Calu3 (cell line): ENCODE measurements at regions of chr7 and their contacts with region 1.

Region 1: DNA sequence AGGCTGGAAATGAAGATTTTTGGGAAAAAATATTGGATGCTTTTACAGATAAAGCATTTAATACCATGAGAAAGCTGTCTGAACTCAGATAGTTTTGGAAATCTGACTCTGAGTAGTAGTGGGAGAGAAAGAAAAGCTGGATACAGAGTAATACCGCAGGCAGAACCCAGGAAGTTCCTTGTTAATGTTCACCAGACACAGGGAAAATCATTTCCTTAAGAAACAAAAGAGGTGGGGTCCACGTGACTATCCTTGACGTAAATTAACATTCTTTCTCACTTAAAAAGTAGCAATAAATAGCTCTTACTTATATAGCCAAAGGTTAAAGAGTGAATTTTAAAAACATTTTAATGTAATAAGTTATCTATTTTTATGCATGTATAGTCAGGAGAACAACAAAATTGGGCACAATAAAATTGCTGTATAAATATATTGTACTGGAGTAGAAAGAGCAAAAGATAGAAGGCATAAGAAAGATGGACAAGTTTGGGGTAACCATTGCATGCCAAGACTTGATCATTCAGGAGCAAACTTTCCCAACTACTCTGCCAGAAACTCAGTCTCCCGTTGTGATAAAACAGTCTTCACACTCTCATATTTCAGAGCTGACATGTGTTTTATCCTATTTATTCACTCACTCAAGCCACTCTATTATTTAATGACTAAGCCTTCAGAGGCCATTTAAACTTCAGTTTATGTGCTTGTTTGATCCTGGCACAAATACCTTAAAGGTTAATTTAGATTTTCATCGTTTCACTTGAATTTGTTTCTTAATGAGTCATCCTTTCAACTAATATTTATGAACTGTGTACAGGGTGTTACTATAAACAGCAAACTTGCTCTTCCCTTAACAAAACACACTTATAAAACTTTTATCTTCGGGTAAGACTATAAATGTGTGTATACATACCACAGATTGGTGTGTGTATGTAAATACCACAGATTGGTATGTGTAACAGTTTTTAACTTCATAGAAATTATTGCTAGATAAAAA is 143.1 kb downstream of the GNAI1 start:
- DNase-seq: peak; percentile 35
- H3K4me3 Mint-ChIP-seq: peak overlapping the region; percentile 21
- H3K27ac Mint-ChIP-seq: peak overlapping the region; percentile 95
- H3K4me1 Mint-ChIP-seq: peaks cover 44% of the 10 kb centered on the region
- H3K27me3 Mint-ChIP-seq: no peaks in the 10 kb centered on the region
- CTCF ChIP-seq: no peak

Region 2: GRCh38 chr7:80312139-80312661 is 34.5 kb after region 1 on chr7:
- CTCF ChIA-PET with region 1: interaction called, 3 read pairs
- intact Hi-C with region 1: loop called (anchors 5 kb)
- DNase-seq: peak; percentile 29
- H3K4me3 Mint-ChIP-seq: no peak overlapping the region
- H3K27ac Mint-ChIP-seq: peak overlapping the region; percentile 36
- H3K4me1 Mint-ChIP-seq: peaks cover 23% of the 10 kb centered on the region
- H3K27me3 Mint-ChIP-seq: no peaks in the 10 kb centered on the region
- CTCF ChIP-seq: no peak

Region 3: DNA sequence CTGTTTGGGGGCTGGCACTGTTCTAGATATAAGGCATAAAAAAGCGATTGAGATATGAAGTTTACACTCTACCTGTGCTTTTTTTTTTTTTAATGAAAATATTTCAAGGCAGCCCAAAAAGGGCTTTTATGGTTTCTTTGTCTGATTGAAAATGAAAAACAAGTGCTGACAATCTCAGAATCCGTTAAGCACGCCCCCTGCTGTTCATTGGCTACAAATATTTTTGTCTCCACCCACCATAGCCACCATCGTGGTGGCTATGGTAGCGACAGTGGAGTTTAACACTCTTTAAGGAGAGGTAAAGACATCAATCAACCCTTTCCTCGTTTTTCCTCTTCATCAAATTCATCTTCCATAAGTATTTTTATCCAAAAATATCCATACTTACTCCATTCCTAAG is 454.9 kb after region 1 on chr7:
- CTCF ChIA-PET with region 1: no interaction called
- intact Hi-C with region 1: loop called (anchors 5 kb)
- DNase-seq: peak; percentile 23
- H3K4me3 Mint-ChIP-seq: no peak overlapping the region
- H3K27ac Mint-ChIP-seq: no peak overlapping the region
- H3K4me1 Mint-ChIP-seq: no peaks in the 10 kb centered on the region
- H3K27me3 Mint-ChIP-seq: no peaks in the 10 kb centered on the region
- CTCF ChIP-seq: peak; percentile 25

Region 4: GRCh38 chr7:81029511-81029910 is 751.8 kb after region 1 on chr7:
- CTCF ChIA-PET with region 1: no interaction called
- intact Hi-C with region 1: no loop called
- DNase-seq: no peak
- H3K4me3 Mint-ChIP-seq: no peak overlapping the region
- H3K27ac Mint-ChIP-seq: no peak overlapping the region
- H3K4me1 Mint-ChIP-seq: no peaks in the 10 kb centered on the region
- H3K27me3 Mint-ChIP-seq: no peaks in the 10 kb centered on the region
- CTCF ChIP-seq: no peak